ENCODE measurements at regions of chr19 and their contacts with region 1.

Region 1: GRCh38 chr19:21835810-21836444 is at the start of gene ZNF43:
- DNase-seq: peak; percentile 79 to 97 (median 94)
- ATAC-seq: peak; percentile 97 to 99
- H3K4me3 Mint-ChIP-seq: peak within 1 kb of the TSS; percentile 97 to 100 (median 99)
- H3K27ac Mint-ChIP-seq: peak within 1 kb of the TSS; percentile 97 to 99 (median 99)
- H3K4me1 Mint-ChIP-seq: peaks cover 3 to 40% (median 29%) of the 10 kb centered on the region in 4 donors
- H3K27me3 Mint-ChIP-seq: no peaks in the 10 kb centered on the region
- polyA plus RNA-seq, gene ZNF43: 14.8 to 18.0 (median 17.6) TPM

Region 2: DNA sequence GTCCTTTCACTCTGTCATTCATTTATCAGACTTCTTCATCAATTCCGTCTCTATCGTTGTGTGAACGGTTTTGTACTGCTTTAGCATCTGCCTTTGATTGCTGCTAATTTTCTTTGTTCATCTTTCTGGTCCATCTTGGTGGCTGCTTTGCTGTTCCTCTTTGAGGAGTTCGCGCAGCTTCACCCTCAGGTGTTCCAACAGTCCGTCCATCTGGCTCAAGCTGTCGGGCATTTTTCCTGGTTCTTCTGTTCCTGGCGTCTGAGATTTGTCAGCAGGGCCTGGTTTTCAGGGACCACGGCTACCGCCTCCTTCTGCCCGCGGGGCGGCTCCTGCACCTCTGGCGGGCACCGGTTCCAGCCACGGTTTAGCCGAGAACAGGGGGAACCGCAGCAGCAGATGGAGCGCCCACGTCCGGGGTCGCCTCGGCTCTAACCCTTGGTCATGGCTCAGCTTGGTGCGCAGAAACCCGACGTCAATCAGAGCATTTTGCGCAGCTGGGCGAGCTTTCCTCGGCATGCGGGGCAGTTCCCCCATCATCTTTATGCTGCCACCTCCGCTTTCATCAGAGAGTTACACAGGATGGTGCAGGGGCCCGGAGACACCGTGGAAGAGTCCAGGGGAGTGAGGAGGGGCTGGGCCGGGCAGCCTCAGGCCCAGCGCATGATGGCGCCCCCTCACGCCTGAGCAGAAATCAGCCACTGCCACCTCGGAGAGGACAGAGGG is 158.1 kb before region 1 on chr19:
- POLR2A ChIA-PET with region 1: no interaction called
- DNase-seq: peak in 4 of 10 donors; percentile 2 to 28 (median 8)
- ATAC-seq: peak; percentile 57 to 84
- H3K4me3 Mint-ChIP-seq: peak overlapping the region in 9 of 10 donors; percentile 42 to 79 (median 67)
- H3K27ac Mint-ChIP-seq: peak overlapping the region in 5 of 10 donors; percentile 11 to 82 (median 56)
- H3K4me1 Mint-ChIP-seq: peaks cover 4 to 13% (median 6%) of the 10 kb centered on the region in 4 donors
- H3K27me3 Mint-ChIP-seq: peaks cover 0 to 3% (median 0%) of the 10 kb centered on the region in 5 donors

Region 3: GRCh38 chr19:21767065-21767800 is 68.7 kb before region 1 on chr19 and contains the start of gene ZNF100:
- POLR2A ChIA-PET with region 1: interaction called, 23 read pairs
- DNase-seq: peak; percentile 70 to 92 (median 85)
- ATAC-seq: peak; percentile 98
- H3K4me3 Mint-ChIP-seq: peak within 1 kb of the TSS; percentile 94 to 98 (median 97)
- H3K27ac Mint-ChIP-seq: peak within 1 kb of the TSS; percentile 92 to 98 (median 94)
- H3K4me1 Mint-ChIP-seq: peaks cover 1 to 34% (median 21%) of the 10 kb centered on the region in 4 donors
- H3K27me3 Mint-ChIP-seq: no peaks in the 10 kb centered on the region
- polyA plus RNA-seq, gene ZNF100: 9.4 to 11.5 (median 9.6) TPM

Region 4: GRCh38 chr19:21851596-21852345 is 15.8 kb after region 1 on chr19:
- POLR2A ChIA-PET with region 1: interaction called, 88 read pairs
- DNase-seq: peak; percentile 78 to 94 (median 90)
- ATAC-seq: peak; percentile 98 to 99
- H3K4me3 Mint-ChIP-seq: peak overlapping the region; percentile 88 to 97 (median 94)
- H3K27ac Mint-ChIP-seq: peak overlapping the region; percentile 86 to 97 (median 94)
- H3K4me1 Mint-ChIP-seq: peaks cover 7 to 31% (median 30%) of the 10 kb centered on the region in 4 donors
- H3K27me3 Mint-ChIP-seq: no peaks in the 10 kb centered on the region

Region 5: DNA sequence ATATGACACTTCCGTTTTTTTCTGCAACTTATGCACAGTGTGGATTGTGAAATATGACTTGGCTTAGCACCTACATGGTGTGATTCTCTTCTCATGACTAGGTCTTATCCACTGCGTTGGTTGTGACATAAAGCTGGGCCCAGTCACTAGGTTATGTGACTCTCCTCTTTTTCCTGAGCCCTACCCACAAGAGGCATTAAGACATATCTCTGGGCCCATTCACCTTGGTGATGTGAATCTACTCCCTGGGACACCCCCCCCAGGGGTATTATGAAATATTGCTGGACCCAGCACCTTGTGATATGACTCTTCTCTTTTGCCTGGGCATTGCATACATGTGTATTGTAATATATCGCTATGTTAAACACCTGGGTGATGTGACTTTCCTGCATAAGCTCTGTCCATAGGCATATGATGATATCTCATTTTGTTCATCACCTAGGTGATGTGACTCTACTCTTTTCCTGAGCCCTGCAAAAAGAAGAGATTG is 85.8 kb after region 1 on chr19:
- POLR2A ChIA-PET with region 1: no interaction called
- DNase-seq: no peak
- ATAC-seq: no peak
- H3K4me3 Mint-ChIP-seq: no peak overlapping the region
- H3K27ac Mint-ChIP-seq: no peak overlapping the region
- H3K4me1 Mint-ChIP-seq: peaks cover 0 to 3% (median 0%) of the 10 kb centered on the region in 4 donors
- H3K27me3 Mint-ChIP-seq: peaks cover 0 to 15% (median 3%) of the 10 kb centered on the region in 5 donors